CD4-positive, alpha-beta memory T cell (primary cell): ENCODE measurements at regions of chr4 and their contacts with region 1.

Region 1: GRCh38 chr4:39638354-39639240 is at the start of gene SMIM14:
- DNase-seq: peak; percentile 84 to 91 (median 86)
- H3K4me3 ChIP-seq: peak within 1 kb of the TSS; percentile 52 to 95
- H3K4me3 Mint-ChIP-seq: peak within 1 kb of the TSS; percentile 87 to 99 (median 92)
- H3K27ac ChIP-seq: peak within 1 kb of the TSS; percentile 77
- H3K27ac Mint-ChIP-seq: peak within 1 kb of the TSS; percentile 74 to 98 (median 96)
- H3K4me1 ChIP-seq: peaks cover 27% of the 10 kb centered on the region
- H3K4me1 Mint-ChIP-seq: peaks cover 20 to 54% (median 32%) of the 10 kb centered on the region in 4 donors
- H3K27me3 ChIP-seq: no peaks in the 10 kb centered on the region
- H3K27me3 Mint-ChIP-seq: no peaks in the 10 kb centered on the region
- total RNA-seq, gene SMIM14: 15.5 to 19.4 TPM

Region 2: DNA sequence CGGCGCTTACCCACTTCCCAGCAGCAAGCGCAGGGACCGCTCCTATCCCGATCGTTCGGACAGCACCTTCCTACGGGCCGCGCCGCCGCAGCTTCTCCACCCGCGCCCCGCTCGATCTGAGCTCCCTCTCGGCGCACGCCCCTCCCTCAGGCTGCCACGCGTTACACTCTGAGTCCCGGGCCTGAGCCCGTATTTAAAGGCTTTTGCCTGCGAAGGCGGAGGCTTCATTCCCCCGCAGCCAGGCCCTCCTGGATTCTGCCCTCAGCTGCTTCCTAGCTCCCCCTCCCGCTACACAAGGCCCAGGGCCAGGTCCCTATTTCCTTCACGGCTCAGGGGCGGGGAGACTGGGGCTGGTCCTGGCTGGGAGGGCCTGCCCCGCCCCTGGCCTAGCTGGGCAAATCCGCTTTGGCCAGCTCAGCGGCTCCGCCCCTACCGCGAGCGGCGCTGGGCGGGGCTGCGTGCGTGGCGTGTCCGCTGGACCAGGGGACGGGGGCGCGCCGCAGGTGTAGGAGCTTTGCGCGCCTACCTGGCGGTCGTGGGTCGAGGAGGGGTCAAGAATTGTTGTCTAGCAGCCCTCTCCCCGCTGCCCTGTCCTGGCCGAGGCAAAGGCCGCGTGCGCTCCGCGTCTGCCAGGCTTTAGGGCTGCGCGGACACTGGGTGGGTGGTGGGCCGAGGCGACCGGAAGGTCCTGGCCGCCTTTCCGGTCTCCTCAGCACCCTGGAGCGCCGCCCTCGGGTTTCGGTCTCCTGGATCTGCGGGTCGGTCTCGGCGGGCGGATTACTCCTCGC is 111.1 kb before region 1 on chr4 and contains the start of gene UGDH:
- CTCF ChIA-PET with region 1: no interaction called
- POLR2A ChIA-PET with region 1: interaction called, 25 read pairs
- intact Hi-C with region 1: loop called (anchors 1 kb)
- DNase-seq: peak; percentile 88 to 92 (median 90)
- H3K4me3 ChIP-seq: peak within 1 kb of the TSS; percentile 71 to 91
- H3K4me3 Mint-ChIP-seq: peak within 1 kb of the TSS; percentile 97 to 99 (median 98)
- H3K27ac ChIP-seq: peak within 1 kb of the TSS; percentile 69
- H3K27ac Mint-ChIP-seq: peak within 1 kb of the TSS; percentile 78 to 98 (median 96)
- H3K4me1 ChIP-seq: peaks cover 18% of the 10 kb centered on the region
- H3K4me1 Mint-ChIP-seq: peaks cover 10 to 25% (median 18%) of the 10 kb centered on the region in 4 donors
- H3K27me3 ChIP-seq: no peaks in the 10 kb centered on the region
- H3K27me3 Mint-ChIP-seq: no peaks in the 10 kb centered on the region
- total RNA-seq, gene UGDH: 21.6 to 26.5 TPM